Activated CD8-positive, alpha-beta T cell treated with anti-CD3 and anti-CD28 coated beads, Interleukin-2, amount 10 ng/mL, durations not matched to agents 7 days and 5 days (primary cell): ENCODE measurements at regions of chr1 and their contacts with region 1.

Region 1: GRCh38 chr1:156154317-156154749 is 948 bp downstream of the SEMA4A start:
- DNase-seq: peak; percentile 77
- ATAC-seq: peak; percentile 93
- H3K4me3 Mint-ChIP-seq: peak overlapping the region; percentile 81
- H3K27ac Mint-ChIP-seq: peak overlapping the region; percentile 74
- H3K4me1 Mint-ChIP-seq: peaks cover 84% of the 10 kb centered on the region
- H3K27me3 Mint-ChIP-seq: no peaks in the 10 kb centered on the region

Region 2: DNA sequence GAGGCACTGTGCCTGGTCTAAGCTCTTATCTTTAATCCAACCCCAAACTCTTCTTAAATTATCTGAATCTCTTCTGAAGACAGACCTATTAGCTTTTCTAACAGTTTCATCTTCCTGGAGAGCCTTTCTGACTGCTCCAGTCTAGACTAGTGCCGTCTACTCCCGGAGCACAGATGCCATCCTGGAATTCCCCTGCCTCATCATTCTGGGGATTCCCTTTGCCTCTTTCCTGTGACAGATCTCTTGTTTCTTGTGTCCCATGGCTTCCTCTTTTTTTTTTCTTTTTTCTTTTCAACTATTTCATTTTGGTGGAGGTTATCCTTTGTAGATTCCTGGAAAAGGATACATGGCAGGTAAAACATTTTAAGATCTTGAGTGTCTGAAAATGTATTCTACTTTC is 10.8 kb after region 1 on chr1:
- CTCF ChIA-PET with region 1: interaction called, 5 read pairs
- POLR2A ChIA-PET with region 1: interaction called, 10 read pairs
- DNase-seq: no peak
- ATAC-seq: no peak
- H3K4me3 Mint-ChIP-seq: no peak overlapping the region
- H3K27ac Mint-ChIP-seq: no peak overlapping the region
- H3K4me1 Mint-ChIP-seq: peaks cover 19% of the 10 kb centered on the region
- H3K27me3 Mint-ChIP-seq: no peaks in the 10 kb centered on the region

Region 3: DNA sequence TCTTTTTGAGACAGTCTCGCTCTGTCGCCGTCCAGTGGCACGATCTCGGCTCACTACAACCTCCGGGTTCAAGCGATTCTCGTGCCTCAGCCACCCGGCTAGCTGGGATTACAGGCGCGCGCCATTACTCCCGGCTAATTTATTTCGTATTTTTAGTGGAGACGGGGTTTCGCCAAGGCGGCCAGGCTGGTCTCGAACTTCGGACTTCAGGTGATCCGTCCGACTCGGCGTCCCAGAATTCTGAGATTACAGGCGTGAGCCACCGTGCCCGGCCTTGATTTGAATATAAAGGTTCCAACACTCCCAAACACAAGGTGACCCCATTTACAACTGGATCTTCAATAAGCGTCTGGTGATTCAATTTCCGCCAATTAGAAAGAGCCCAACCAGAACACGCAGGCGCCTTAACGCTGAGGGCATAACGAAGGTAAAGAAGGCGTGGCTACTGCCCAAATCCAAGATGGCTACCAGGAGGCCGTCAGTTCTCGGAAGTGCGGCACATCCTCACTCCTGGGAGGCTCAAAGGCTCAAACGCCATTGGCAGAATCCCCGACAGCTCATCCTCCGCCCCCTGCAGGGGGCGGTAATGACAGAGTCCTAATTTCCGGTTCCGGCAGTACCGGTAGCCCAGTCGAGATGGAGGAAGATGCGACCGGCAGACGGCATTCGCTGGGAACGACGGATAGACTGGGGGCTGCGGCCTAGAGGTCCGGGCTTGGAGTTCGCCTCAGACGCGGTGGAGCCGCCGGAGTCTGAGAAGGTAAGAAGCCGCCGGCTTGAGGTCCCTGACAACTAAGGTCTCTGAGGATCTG is 39.4 kb after region 1 on chr1 and contains the start of gene SLC25A44:
- CTCF ChIA-PET with region 1: interaction called, 4 read pairs
- POLR2A ChIA-PET with region 1: interaction called, 24 read pairs
- DNase-seq: peak; percentile 98
- ATAC-seq: peak; percentile 98
- H3K4me3 Mint-ChIP-seq: peak within 1 kb of the TSS; percentile 89
- H3K27ac Mint-ChIP-seq: peak within 1 kb of the TSS; percentile 87
- H3K4me1 Mint-ChIP-seq: peaks cover 57% of the 10 kb centered on the region
- H3K27me3 Mint-ChIP-seq: no peaks in the 10 kb centered on the region
- total RNA-seq, gene SLC25A44: 31.8 to 33.8 TPM